Activated CD4-positive, alpha-beta memory T cell treated with anti-CD3 and anti-CD28 coated beads, Interleukin-2, amount 10 ng/mL, durations not matched to agents 7 days and 5 days (primary cell): ENCODE measurements at regions of chr19 and their contacts with region 1.

Region 1: GRCh38 chr19:4342615-4343369 is 570 bp upstream of the MPND start:
- DNase-seq: peak; percentile 96
- H3K4me3 Mint-ChIP-seq: peak overlapping the region; percentile 90
- H3K27ac Mint-ChIP-seq: peak overlapping the region; percentile 90
- H3K4me1 Mint-ChIP-seq: peaks cover 36% of the 10 kb centered on the region
- H3K27me3 Mint-ChIP-seq: no peaks in the 10 kb centered on the region

Region 2: GRCh38 chr19:4267101-4267900 is 75.5 kb before region 1 on chr19:
- CTCF ChIA-PET with region 1: interaction called, 45 read pairs
- POLR2A ChIA-PET with region 1: interaction called, 5 read pairs
- DNase-seq: peak; percentile 66
- H3K4me3 Mint-ChIP-seq: no peak overlapping the region
- H3K27ac Mint-ChIP-seq: no peak overlapping the region
- H3K4me1 Mint-ChIP-seq: peaks cover 18% of the 10 kb centered on the region
- H3K27me3 Mint-ChIP-seq: no peaks in the 10 kb centered on the region

Region 3: GRCh38 chr19:4362861-4363510 is 20.2 kb after region 1 on chr19:
- CTCF ChIA-PET with region 1: interaction called, 5 read pairs
- POLR2A ChIA-PET with region 1: interaction called, 22 read pairs
- DNase-seq: no peak
- H3K4me3 Mint-ChIP-seq: no peak overlapping the region
- H3K27ac Mint-ChIP-seq: no peak overlapping the region
- H3K4me1 Mint-ChIP-seq: peaks cover 10% of the 10 kb centered on the region
- H3K27me3 Mint-ChIP-seq: no peaks in the 10 kb centered on the region

Region 4: DNA sequence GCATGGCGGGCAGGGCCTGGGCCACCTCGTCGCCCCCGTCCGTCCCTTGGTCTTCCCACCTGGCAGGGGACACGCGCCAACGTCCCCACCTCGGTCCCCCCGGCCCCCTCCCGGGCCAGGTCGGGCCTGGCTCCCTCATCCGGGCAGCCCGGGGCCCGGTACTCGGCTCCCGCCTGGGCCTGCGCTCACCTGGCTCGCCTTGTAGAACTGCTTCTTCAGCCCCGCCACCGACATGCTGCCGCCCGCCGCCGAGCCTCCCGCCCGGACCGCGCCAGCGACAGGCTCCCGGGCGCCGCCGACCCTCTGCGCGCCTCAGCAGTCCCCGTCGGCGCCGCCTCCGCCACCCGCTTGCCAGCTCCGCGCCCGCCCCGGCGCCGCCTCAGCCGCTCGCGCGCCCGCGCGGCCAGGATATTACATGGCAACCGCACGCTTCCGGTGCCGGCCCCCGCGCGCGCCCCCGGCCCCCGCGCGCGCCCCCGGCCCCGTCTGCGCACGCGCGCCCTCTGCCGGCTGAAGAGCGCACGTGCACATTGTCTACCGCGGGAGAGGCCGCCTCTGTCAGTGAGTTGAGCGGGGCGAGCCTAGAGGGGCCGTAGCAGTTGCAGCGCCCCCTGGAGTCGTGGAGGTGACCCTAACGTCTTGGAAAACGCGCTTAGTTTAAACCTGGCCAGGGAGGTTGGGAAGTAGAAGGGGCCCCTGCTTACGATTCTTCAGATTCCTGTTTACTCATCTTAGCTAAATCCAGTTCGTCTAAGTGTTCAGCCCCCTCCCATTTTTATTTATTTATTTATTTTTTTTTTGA is 57.5 kb after region 1 on chr19 and contains the start of gene SH3GL1:
- CTCF ChIA-PET with region 1: interaction called, 12 read pairs
- POLR2A ChIA-PET with region 1: interaction called, 12 read pairs
- DNase-seq: peak; percentile 94
- H3K4me3 Mint-ChIP-seq: peak within 1 kb of the TSS; percentile 93
- H3K27ac Mint-ChIP-seq: peak within 1 kb of the TSS; percentile 92
- H3K4me1 Mint-ChIP-seq: peaks cover 70% of the 10 kb centered on the region
- H3K27me3 Mint-ChIP-seq: no peaks in the 10 kb centered on the region
- total RNA-seq, gene SH3GL1: 62.1 to 64.0 TPM